Activated CD8-positive, alpha-beta memory T cell treated with anti-CD3 and anti-CD28 coated beads, Interleukin-2, amount 10 ng/mL, durations not matched to agents 7 days and 5 days (primary cell): ENCODE measurements at regions of chr17 and their contacts with region 1.

Region 1: GRCh38 chr17:78986048-78986648 is 6.4 kb upstream of the LGALS3BP start:
- DNase-seq: no peak
- ATAC-seq: peak; percentile 76
- H3K4me3 Mint-ChIP-seq: no peak overlapping the region
- H3K27ac Mint-ChIP-seq: no peak overlapping the region
- H3K4me1 Mint-ChIP-seq: peaks cover 15% of the 10 kb centered on the region
- H3K27me3 Mint-ChIP-seq: peaks cover 8% of the 10 kb centered on the region

Region 2: GRCh38 chr17:79045842-79046196 is 59.7 kb after region 1 on chr17:
- CTCF ChIA-PET with region 1: interaction called, 10 read pairs
- DNase-seq: peak; percentile 71
- ATAC-seq: peak; percentile 80
- H3K4me3 Mint-ChIP-seq: no peak overlapping the region
- H3K27ac Mint-ChIP-seq: no peak overlapping the region
- H3K4me1 Mint-ChIP-seq: no peaks in the 10 kb centered on the region
- H3K27me3 Mint-ChIP-seq: no peaks in the 10 kb centered on the region